ENCODE measurements at regions of chr2 and their contacts with region 1.

Region 1: GRCh38 chr2:231411831-231412617 is 16.5 kb downstream of the B3GNT7 start:
- DNase-seq: peak; percentile 69 to 98
- H3K4me3 ChIP-seq: peak overlapping the region; percentile 33 to 62 (median 42)
- H3K27ac ChIP-seq: peak overlapping the region; percentile 41; the same call in 1 of the 2 replicates
- H3K4me1 ChIP-seq: peaks cover 14 to 29% (median 20%) of the 10 kb centered on the region in 4 experiments
- H3K27me3 ChIP-seq: no peaks in the 10 kb centered on the region
- CTCF ChIP-seq: peak; percentile 90 to 97 (median 96)
- EP300 ChIP-seq: no peak
- POLR2A ChIP-seq: peak in 1 of 2 experiments; percentile 63; a peak in 1 of 3 replicates
- RAD21 ChIP-seq: peak; percentile 93 to 94

Region 2: DNA sequence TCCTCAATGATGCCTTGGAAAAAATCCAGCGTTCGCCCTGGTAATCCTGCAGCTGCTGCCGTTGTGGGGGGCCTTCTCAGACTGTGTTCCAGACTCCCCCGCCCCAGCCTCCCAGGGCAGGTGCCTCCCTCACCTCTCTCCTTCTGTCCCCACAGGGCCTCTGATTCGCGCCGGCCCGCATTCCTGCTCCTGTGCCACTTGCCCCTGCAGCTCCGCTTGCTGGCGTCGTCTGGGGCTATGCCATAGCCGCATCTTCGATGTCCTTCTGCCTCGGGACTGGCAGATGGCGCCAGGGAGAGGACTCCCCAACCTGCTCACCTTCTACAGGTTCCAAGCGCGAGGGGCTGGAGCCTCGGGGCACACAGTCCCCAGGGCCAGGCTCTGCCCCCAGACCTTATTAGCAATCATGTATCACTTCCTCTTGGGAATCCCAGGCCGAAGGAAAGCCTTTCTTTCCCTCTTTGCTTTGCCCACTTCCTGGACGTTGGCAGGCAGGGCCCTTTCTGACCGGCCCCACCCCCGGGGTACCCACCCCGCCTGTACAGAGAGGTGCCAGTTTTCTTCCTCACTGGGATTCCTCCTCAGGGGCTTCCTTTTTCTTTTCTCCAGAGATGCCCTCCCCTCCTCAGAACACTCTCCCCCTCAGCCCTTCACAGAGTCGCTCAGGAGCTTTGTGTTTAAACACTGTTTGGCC is 411.7 kb before region 1 on chr2:
- CTCF ChIA-PET with region 1: no interaction called
- POLR2A ChIA-PET with region 1: no interaction called
- DNase-seq: peak; percentile 60 to 70
- H3K4me3 ChIP-seq: no peak overlapping the region
- H3K27ac ChIP-seq: no peak overlapping the region
- H3K4me1 ChIP-seq: no peaks in the 10 kb centered on the region; a peak in 2 of 7 replicates
- H3K27me3 ChIP-seq: peaks cover 0 to 6% (median 3%) of the 10 kb centered on the region in 4 experiments; a peak in 3 of 7 replicates
- CTCF ChIP-seq: peak; percentile 67 to 80 (median 69)
- EP300 ChIP-seq: no peak
- POLR2A ChIP-seq: no peak
- RAD21 ChIP-seq: peak; percentile 61 to 73; a peak in 3 of 4 replicates

Region 3: DNA sequence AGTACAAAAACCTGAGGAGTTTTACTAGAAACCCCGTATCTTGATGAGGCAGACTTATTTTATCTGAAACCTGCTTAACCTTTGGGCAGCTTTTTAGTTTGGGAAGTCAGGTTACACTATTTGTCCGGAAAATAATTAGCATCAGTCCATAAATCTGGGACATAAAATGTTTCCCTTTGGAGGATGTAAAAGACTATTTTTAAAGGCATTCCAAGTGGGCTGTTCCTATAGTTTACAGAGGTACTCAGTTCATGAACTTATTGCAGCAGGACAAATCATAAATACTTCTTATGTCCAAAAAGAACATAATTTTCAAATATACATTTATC is 293.4 kb before region 1 on chr2:
- CTCF ChIA-PET with region 1: no interaction called
- POLR2A ChIA-PET with region 1: no interaction called
- DNase-seq: no peak
- H3K4me3 ChIP-seq: no peak overlapping the region
- H3K27ac ChIP-seq: no peak overlapping the region
- H3K4me1 ChIP-seq: peaks cover 0 to 9% (median 6%) of the 10 kb centered on the region in 4 experiments; a peak in 4 of 7 replicates
- H3K27me3 ChIP-seq: no peaks in the 10 kb centered on the region
- CTCF ChIP-seq: no peak
- EP300 ChIP-seq: no peak
- POLR2A ChIP-seq: no peak
- RAD21 ChIP-seq: no peak

Region 4: DNA sequence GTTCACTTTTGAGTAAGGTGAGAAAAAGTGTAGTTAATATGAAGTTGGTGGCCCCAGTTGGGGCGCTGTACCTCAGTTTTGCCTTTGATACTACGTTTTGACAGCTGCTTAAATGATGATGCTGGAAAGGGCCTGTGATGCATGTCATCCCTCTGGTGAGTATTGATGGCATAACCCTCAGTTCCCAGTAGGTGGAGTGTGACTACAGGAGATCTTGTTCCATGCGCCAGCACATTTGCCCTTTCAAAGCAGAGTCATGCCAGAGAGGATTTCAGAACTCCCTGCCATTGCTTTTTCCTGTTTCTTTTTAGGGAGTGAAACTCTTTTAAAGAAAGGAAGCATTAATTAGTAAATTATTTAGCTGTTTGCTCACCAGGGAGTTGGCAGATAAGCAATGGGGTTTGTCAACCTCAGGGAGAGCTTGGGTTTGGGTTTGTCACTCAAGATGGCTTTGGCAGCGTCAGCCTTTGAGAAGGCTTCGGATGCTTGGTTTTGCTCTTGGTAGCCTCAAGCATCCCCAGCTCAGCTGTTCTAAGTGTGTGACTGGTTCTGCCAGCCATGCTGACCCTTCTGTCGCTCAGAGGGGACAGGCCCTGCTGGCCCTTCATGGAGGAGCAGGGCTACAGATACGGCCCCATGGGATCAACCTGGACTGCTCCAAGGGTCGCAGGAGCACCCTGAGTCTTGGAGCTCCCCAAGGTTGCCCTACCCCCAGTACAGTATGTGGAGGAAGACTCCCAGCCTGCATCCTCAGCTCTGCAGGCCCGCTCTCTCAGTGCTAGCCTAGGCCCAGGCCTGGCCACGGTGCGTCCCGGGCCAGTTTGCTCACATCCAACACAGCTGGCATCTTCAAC is 184.5 kb before region 1 on chr2:
- CTCF ChIA-PET with region 1: interaction called, 218 read pairs
- POLR2A ChIA-PET with region 1: interaction called, 7 read pairs
- DNase-seq: peak in 1 of 2 experiments; percentile 29
- H3K4me3 ChIP-seq: no peak overlapping the region
- H3K27ac ChIP-seq: no peak overlapping the region
- H3K4me1 ChIP-seq: peaks cover 0 to 7% (median 4%) of the 10 kb centered on the region in 4 experiments
- H3K27me3 ChIP-seq: no peaks in the 10 kb centered on the region
- CTCF ChIP-seq: peak; percentile 65 to 91 (median 89)
- EP300 ChIP-seq: no peak
- POLR2A ChIP-seq: no peak
- RAD21 ChIP-seq: peak; percentile 95 to 96

Region 5: GRCh38 chr2:231297108-231297908 is 114.7 kb before region 1 on chr2:
- CTCF ChIA-PET with region 1: interaction called, 36 read pairs
- POLR2A ChIA-PET with region 1: interaction called, 5 read pairs
- DNase-seq: peak; percentile 31 to 77
- H3K4me3 ChIP-seq: no peak overlapping the region
- H3K27ac ChIP-seq: no peak overlapping the region
- H3K4me1 ChIP-seq: peaks cover 0 to 9% (median 3%) of the 10 kb centered on the region in 4 experiments; a peak in 2 of 7 replicates
- H3K27me3 ChIP-seq: no peaks in the 10 kb centered on the region
- CTCF ChIP-seq: peak; percentile 89 to 96 (median 90)
- EP300 ChIP-seq: no peak
- POLR2A ChIP-seq: no peak
- RAD21 ChIP-seq: peak; percentile 84

Region 6: DNA sequence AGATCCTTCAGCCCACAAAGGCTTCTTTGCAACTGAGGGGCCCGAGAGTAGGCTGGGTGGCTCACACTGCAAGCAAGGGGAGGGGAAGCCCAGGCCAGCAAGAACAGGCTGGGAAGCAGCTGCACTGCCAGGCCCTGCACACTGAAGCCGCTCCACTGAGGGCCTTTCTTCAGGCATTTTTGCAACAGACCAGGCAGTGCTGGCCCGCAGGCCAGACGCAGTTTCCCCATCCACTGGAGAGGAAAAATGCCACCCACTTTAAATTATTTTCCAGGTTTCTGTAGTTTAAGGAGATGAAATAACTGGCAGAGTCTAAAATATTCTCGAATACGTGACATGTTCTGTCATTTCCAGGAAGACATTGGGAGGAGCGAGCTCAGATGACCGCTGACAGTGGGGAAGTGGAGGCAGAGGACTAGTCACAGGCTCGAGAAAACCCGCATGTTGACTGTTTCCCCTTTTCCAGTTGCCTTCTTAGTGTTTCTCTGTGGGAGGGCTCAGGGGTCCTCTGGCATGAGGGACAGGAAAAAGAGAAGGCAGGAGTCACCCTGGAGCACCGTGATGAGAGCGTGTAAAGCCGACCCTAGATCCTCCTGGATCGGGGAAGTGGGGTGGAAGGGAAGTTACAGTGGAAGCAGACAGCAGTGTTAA is 69.8 kb before region 1 on chr2:
- CTCF ChIA-PET with region 1: interaction called, 10 read pairs
- POLR2A ChIA-PET with region 1: interaction called, 4 read pairs
- DNase-seq: no peak
- H3K4me3 ChIP-seq: no peak overlapping the region
- H3K27ac ChIP-seq: no peak overlapping the region; the same call in 1 of the 2 replicates
- H3K4me1 ChIP-seq: peaks cover 0 to 8% (median 4%) of the 10 kb centered on the region in 4 experiments; a peak in 2 of 7 replicates
- H3K27me3 ChIP-seq: no peaks in the 10 kb centered on the region
- CTCF ChIP-seq: no peak
- EP300 ChIP-seq: no peak
- POLR2A ChIP-seq: no peak
- RAD21 ChIP-seq: no peak

Region 7: GRCh38 chr2:231394211-231395141 is 17.5 kb before region 1 on chr2:
- CTCF ChIA-PET with region 1: interaction called, 537 read pairs
- POLR2A ChIA-PET with region 1: interaction called, 14 read pairs
- DNase-seq: peak in 1 of 2 experiments; percentile 78
- H3K4me3 ChIP-seq: peak overlapping the region in 2 of 4 experiments; percentile 46 to 74; a peak in 5 of 8 replicates
- H3K27ac ChIP-seq: no peak overlapping the region
- H3K4me1 ChIP-seq: peaks cover 3 to 37% (median 20%) of the 10 kb centered on the region in 4 experiments
- H3K27me3 ChIP-seq: no peaks in the 10 kb centered on the region
- CTCF ChIP-seq: peak in 2 of 3 experiments; percentile 67 to 78; a peak in 3 of 4 replicates
- EP300 ChIP-seq: no peak
- POLR2A ChIP-seq: no peak
- RAD21 ChIP-seq: peak; percentile 58 to 75

Region 8: DNA sequence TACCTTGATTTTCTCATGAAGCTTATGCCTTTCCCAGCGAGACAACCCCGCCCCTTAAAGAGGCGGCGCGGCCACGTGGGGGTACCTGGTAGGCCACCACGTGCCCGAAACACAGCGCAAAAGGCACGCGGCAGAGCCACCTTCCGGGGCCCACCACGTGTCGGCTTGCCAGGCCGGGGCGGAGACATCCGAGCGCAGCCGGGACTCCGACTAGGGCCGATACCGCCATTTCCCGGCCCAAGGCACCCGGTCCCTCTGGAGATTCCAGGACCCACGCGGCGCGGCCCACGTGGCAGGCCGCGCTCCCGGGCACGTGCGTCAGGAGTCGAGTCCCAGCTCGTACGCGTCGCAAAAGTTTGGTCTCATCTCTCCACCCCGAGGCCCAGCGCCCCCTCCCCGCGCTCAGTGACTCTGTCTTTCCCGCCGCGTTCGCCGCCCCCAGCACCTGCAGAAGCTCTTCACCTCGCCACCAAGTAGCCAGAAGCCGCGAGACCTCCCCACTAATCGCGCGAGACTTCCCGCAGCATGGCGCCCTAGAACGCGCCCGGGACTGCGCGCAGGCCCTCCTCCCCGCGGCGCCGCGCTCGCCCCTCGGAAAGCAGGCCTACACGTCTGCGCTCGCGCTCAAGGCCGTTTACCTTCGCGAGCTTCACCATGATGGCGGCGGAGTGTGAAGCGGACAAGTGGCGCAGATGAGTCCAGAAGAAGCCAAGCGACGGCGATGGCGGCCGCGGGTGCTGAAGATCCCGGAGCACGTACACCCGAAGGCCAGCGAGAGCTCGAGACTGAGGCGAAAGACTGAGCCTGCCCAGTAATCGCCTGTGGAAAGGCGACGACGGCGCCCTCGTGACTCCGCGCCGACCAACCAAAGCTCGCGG is 51.9 kb after region 1 on chr2 and contains the start of gene NCL:
- CTCF ChIA-PET with region 1: interaction called, 4 read pairs
- POLR2A ChIA-PET with region 1: interaction called, 235 read pairs
- DNase-seq: no peak
- H3K4me3 ChIP-seq: peak within 1 kb of the TSS; percentile 85 to 97 (median 94)
- H3K27ac ChIP-seq: peak within 1 kb of the TSS; percentile 99
- H3K4me1 ChIP-seq: peaks cover 0 to 20% (median 6%) of the 10 kb centered on the region in 4 experiments; a peak in 6 of 7 replicates
- H3K27me3 ChIP-seq: no peaks in the 10 kb centered on the region
- CTCF ChIP-seq: no peak
- EP300 ChIP-seq: no peak
- POLR2A ChIP-seq: peak; percentile 98 to 99
- RAD21 ChIP-seq: no peak
- total RNA-seq, gene NCL: 1,442 and 1,478 TPM in 2 replicates